ENCODE measurements at regions of chr10 and their contacts with region 1.

Region 1: GRCh38 chr10:34814223-34814912 is 728 bp downstream of the PARD3 start:
- DNase-seq: no peak
- H3K4me3 ChIP-seq: peak overlapping the region; percentile 82 to 96 (median 93)
- H3K27ac ChIP-seq: peak overlapping the region; percentile 88 to 94 (median 93)
- H3K4me1 ChIP-seq: peaks cover 27 to 65% (median 55%) of the 10 kb centered on the region in 4 donors
- H3K27me3 ChIP-seq: no peaks in the 10 kb centered on the region
- CTCF ChIP-seq: peak in 1 of 3 experiments; percentile 13
- EP300 ChIP-seq: no peak
- POLR2A ChIP-seq: no peak

Region 2: GRCh38 chr10:34727595-34728033 is 86.8 kb before region 1 on chr10:
- intact Hi-C with region 1: loop called (anchors 5 kb)
- DNase-seq: peak; percentile 91
- H3K4me3 ChIP-seq: no peak overlapping the region
- H3K27ac ChIP-seq: no peak overlapping the region
- H3K4me1 ChIP-seq: peaks cover 40 to 89% (median 80%) of the 10 kb centered on the region in 4 donors
- H3K27me3 ChIP-seq: no peaks in the 10 kb centered on the region
- CTCF ChIP-seq: no peak
- EP300 ChIP-seq: no peak
- POLR2A ChIP-seq: no peak

Region 3: DNA sequence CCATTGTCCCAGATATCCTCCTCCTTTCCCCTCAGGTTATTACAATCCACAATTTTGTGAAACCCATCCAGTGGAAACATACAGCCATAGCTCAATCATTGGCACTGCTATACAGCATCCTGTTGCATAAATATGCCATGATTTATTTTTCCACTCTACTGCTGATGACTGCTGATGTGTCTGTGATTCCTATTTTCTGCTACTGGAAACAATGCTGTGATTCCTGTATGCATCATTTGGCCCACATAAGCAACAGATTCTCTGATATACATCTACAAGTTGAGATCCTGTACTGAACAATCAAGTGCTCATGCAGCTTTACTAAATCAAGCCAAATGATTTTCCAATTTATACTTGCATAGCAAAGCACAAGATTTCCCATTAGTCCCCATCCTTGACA is 236.2 kb after region 1 on chr10:
- intact Hi-C with region 1: no loop called
- DNase-seq: no peak
- H3K4me3 ChIP-seq: no peak overlapping the region
- H3K27ac ChIP-seq: no peak overlapping the region
- H3K4me1 ChIP-seq: no peaks in the 10 kb centered on the region
- H3K27me3 ChIP-seq: no peaks in the 10 kb centered on the region
- CTCF ChIP-seq: no peak
- EP300 ChIP-seq: no peak
- POLR2A ChIP-seq: no peak

Region 4: GRCh38 chr10:35372329-35372728 is 558.0 kb after region 1 on chr10:
- intact Hi-C with region 1: no loop called
- DNase-seq: no peak
- H3K4me3 ChIP-seq: no peak overlapping the region
- H3K27ac ChIP-seq: peak overlapping the region; percentile 58 to 64 (median 62)
- H3K4me1 ChIP-seq: peaks cover 63 to 78% (median 74%) of the 10 kb centered on the region in 4 donors
- H3K27me3 ChIP-seq: no peaks in the 10 kb centered on the region
- CTCF ChIP-seq: no peak
- EP300 ChIP-seq: no peak
- POLR2A ChIP-seq: no peak